Breast epithelium (tissue), 4 donors: ENCODE measurements at regions of chr10 and their contacts with region 1.

Region 1: GRCh38 chr10:102262744-102263370 is 17.5 kb downstream of the GBF1 start:
- DNase-seq: no peak
- H3K4me3 ChIP-seq: no peak overlapping the region
- H3K27ac ChIP-seq: no peak overlapping the region
- H3K4me1 ChIP-seq: no peaks in the 10 kb centered on the region
- H3K27me3 ChIP-seq: no peaks in the 10 kb centered on the region
- CTCF ChIP-seq: no peak
- POLR2A ChIP-seq: no peak

Region 2: GRCh38 chr10:102517553-102517952 is 254.7 kb after region 1 on chr10:
- intact Hi-C with region 1: no loop called
- DNase-seq: no peak
- H3K4me3 ChIP-seq: no peak overlapping the region
- H3K27ac ChIP-seq: no peak overlapping the region
- H3K4me1 ChIP-seq: no peaks in the 10 kb centered on the region
- H3K27me3 ChIP-seq: no peaks in the 10 kb centered on the region
- CTCF ChIP-seq: no peak
- POLR2A ChIP-seq: no peak

Region 3: DNA sequence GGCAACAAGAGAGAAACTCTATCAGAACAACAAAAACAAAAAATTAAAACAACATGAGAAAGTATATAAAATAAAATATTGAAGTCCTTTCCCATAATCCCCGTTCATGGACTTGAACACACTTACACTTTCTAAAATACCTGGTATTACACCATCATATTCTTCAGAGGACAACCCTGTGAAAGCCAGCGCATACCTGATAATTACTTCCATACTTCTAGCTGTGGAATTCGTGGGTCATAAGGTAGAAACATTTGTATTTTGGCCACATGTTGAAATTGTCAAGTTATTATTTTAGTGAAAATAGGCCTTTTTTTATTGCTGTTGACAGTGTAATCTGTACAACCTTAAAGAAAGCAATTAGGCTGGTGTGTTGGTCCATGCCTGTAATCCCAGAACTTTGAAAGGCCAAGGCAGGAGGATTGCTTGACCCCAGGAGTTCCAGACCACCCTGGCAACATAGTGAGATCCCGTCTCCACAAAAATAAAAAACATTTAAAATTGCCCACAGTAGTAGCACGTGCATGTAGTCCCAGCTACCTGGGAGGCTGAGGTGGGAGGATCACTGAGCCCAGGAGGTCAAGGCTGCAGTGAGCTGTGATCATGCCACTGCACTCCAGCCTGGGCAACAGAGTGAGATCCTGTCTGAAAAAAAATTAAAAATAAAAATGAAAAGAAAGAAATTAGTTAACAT is 1093.2 kb after region 1 on chr10:
- intact Hi-C with region 1: loop called (anchors 5 kb)
- DNase-seq: no peak
- H3K4me3 ChIP-seq: no peak overlapping the region
- H3K27ac ChIP-seq: no peak overlapping the region
- H3K4me1 ChIP-seq: no peaks in the 10 kb centered on the region
- H3K27me3 ChIP-seq: no peaks in the 10 kb centered on the region
- CTCF ChIP-seq: no peak
- POLR2A ChIP-seq: no peak